ENCODE measurements at regions of chr20 and their contacts with region 1.

Region 1: GRCh38 chr20:6767536-6768227 is at the start of gene BMP2:
- DNase-seq: peak; percentile 71 to 75
- H3K4me3 ChIP-seq: peak within 1 kb of the TSS; percentile 33 to 87 (median 86)
- H3K27ac ChIP-seq: peak within 1 kb of the TSS; percentile 80 to 93 (median 89)
- H3K4me1 ChIP-seq: peaks cover 13 to 18% of the 10 kb centered on the region in 2 donors
- H3K27me3 ChIP-seq: no peaks in the 10 kb centered on the region
- CTCF ChIP-seq: peak in 1 of 6 experiments; percentile 7
- POLR2A ChIP-seq: peak; percentile 80 to 95
- total RNA-seq, gene BMP2: 19.1 to 27.1 (median 20.2) TPM

Region 2: DNA sequence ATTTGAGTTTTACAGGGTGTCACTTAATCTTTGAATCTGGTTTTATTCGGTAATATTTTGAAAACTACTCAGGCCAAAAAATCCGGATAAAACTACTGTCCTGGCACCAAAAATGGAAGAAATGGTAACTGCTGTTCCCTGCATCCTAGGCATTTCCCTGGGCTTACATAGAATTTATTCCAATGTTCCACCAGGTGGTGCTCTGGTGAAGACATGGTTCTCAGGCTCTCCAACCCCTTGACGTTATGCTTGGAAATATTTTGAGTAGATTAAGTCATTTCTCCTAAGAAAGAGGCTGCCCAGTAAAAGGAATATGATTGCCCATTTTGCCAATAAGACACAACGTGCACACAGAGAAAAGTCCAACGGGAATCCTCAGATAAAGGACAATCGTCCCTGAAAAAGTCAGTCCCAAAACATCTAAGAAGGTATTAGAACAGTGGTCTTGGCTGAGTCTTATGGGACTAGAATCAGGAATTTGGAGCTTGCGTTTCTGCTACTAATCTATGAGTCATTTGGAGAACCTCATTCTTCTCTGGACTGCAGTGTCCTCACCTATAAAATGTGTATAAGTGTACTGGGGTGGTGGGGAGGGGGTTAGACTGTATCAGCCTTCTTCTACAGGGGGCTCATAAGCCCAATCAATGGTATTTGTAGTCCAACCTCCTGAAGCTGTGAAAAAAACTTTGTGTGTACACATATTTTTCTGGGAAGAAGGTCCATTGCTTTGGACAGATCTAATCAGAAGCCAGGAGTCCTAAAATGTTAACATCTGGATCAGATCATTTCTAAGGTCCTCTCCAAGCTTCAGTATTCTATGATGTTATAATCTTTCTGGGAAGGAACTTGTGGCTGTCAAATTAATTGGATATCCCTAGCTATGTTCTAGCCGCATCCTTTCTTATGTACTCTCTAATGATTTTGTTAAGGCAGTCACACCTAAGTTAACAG is 131.2 kb before region 1 on chr20:
- intact Hi-C with region 1: loop called (anchors 5 kb)
- DNase-seq: peak; percentile 35 to 50
- H3K4me3 ChIP-seq: no peak overlapping the region
- H3K27ac ChIP-seq: peak overlapping the region in 2 of 3 donors; percentile 11 to 31
- H3K4me1 ChIP-seq: peaks cover 0 to 13% of the 10 kb centered on the region in 2 donors
- H3K27me3 ChIP-seq: no peaks in the 10 kb centered on the region
- CTCF ChIP-seq: peak in 5 of 6 experiments; percentile 33 to 89 (median 75)
- POLR2A ChIP-seq: no peak

Region 3: DNA sequence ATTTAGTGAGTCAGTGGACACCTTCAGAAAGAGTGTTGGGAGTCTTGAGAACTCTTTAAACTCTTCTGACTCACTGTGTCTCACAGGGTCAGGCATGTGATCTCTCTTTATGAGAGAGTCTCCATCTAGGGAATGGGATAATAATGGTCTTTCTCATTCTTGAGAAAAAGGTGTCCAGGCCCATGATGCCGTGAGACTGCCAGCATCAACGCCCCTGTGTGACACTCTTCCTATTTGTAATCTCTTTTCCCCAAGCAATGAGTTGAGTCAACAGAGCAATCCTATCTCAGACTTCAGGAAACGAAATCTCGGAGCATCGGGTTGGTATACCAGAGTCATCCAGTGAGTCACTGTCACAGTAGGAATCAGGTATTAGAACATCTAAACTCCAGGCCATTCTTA is 82.5 kb before region 1 on chr20:
- intact Hi-C with region 1: no loop called
- DNase-seq: no peak
- H3K4me3 ChIP-seq: no peak overlapping the region
- H3K27ac ChIP-seq: no peak overlapping the region
- H3K4me1 ChIP-seq: peaks cover 18 to 21% of the 10 kb centered on the region in 2 donors
- H3K27me3 ChIP-seq: no peaks in the 10 kb centered on the region
- CTCF ChIP-seq: no peak
- POLR2A ChIP-seq: no peak

Region 4: GRCh38 chr20:6718651-6719368 is 48.9 kb before region 1 on chr20:
- intact Hi-C with region 1: loop called (anchors 5 kb)
- DNase-seq: peak; percentile 76 to 84
- H3K4me3 ChIP-seq: no peak overlapping the region
- H3K27ac ChIP-seq: no peak overlapping the region
- H3K4me1 ChIP-seq: peaks cover 0 to 8% of the 10 kb centered on the region in 2 donors
- H3K27me3 ChIP-seq: no peaks in the 10 kb centered on the region
- CTCF ChIP-seq: no peak
- POLR2A ChIP-seq: no peak

Region 5: DNA sequence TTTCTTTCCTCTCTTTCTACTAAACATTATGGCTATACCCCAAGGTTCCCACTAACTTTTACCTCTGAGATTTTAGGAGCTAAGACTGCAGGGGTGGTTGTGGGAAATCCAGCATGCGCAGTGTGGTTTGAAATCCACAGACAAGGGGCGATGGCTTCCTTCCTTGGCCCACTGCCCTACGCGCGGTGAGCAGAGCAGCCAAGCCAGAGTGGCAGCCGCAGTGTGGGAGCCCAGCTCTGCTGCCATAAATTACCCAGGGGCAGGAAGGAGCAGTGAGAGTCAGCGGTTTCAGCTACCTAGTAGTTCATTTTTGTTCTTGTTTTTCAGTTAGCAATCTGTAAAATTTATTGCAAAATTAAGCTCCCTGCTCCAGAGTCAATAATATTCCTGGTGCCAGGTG is 101.2 kb after region 1 on chr20:
- intact Hi-C with region 1: no loop called
- DNase-seq: no peak
- H3K4me3 ChIP-seq: no peak overlapping the region
- H3K27ac ChIP-seq: no peak overlapping the region
- H3K4me1 ChIP-seq: no peaks in the 10 kb centered on the region
- H3K27me3 ChIP-seq: no peaks in the 10 kb centered on the region
- CTCF ChIP-seq: no peak
- POLR2A ChIP-seq: no peak

Region 6: GRCh38 chr20:7151676-7152470 is 384.2 kb after region 1 on chr20:
- intact Hi-C with region 1: no loop called
- DNase-seq: no peak
- H3K4me3 ChIP-seq: no peak overlapping the region
- H3K27ac ChIP-seq: no peak overlapping the region
- H3K4me1 ChIP-seq: no peaks in the 10 kb centered on the region
- H3K27me3 ChIP-seq: no peaks in the 10 kb centered on the region
- CTCF ChIP-seq: no peak
- POLR2A ChIP-seq: no peak

Measured in thyroid gland (tissue), 4 donors.